ENCODE measurements at regions of chr12 and their contacts with region 1.

Region 1: DNA sequence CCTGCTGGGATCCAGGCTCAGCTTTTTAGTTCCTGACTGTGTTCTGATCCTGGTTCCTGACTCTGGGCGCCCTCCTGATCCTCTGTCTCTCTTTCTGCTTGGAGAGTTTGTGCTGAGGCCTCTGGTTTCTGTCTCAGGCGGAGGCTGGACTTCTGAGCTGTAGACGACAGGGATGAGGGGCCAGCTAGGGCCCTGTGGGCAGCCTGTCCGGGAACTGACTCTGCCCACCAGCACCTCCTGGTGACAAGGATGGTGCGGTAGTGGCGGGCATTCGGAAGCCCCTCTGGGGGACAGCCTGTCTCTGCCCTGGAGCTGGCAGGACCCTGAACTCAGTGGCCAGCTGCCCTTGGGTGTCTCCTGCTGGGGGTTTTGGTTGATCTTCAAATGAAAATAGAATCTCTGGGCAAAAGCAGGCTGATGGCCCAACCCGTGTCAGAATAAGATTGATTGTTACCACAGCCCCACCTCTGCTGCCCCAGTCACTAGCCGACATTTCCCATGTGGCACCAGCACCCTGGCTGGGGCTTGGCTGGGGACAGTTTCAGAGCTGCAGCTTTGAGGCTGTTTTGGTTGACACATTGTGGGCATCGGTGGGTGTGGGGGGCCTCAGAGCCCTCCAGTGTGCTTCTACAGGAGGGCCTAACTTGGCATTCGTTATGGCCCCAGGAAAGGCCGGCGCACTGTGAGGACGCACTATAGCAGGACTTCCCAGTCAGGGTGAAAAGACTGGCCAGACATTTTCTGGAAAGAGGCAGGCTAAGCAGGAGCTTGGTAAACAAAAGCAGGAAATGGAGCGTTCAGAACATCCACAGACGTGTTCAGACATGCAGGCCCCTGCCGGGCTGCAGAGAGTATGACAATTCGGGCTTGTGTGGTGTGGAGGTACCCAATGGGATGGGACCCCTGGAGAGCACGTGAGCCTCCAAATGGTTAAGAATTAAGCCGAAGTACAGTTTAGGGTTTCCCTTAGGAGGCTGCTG is 16.2 kb downstream of the KRT80 start:
- DNase-seq: no peak
- H3K4me3 ChIP-seq: no peak overlapping the region
- H3K27ac ChIP-seq: no peak overlapping the region
- H3K4me1 ChIP-seq: no peaks in the 10 kb centered on the region
- H3K27me3 ChIP-seq: no peaks in the 10 kb centered on the region
- CTCF ChIP-seq: no peak

Region 2: DNA sequence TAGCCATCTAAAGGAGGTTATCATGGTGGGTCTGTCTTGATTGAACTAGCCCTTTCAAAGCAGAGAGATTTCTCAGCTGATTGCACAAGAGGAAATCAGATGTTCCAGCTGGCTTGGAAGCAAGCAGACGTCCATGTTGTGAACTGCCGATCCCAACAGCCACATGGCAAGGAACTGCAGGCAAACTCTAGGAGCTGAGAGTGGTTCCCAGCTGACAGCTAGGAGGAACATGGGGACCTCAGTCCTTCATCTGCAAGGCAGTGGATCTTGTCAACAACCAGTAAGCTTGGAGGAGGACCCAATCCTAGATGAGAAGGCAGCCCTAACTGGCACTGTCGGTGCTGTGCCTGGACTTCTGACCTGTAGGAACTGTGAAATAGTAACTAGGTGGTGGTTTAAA is 216.4 kb before region 1 on chr12:
- CTCF ChIA-PET with region 1: no interaction called
- POLR2A ChIA-PET with region 1: no interaction called
- intact Hi-C with region 1: no loop called
- DNase-seq: no peak
- H3K4me3 ChIP-seq: no peak overlapping the region
- H3K27ac ChIP-seq: no peak overlapping the region
- H3K4me1 ChIP-seq: peaks cover 15% of the 10 kb centered on the region
- H3K27me3 ChIP-seq: no peaks in the 10 kb centered on the region
- CTCF ChIP-seq: no peak

Region 3: GRCh38 chr12:52032804-52033502 is 142.7 kb before region 1 on chr12:
- CTCF ChIA-PET with region 1: no interaction called
- POLR2A ChIA-PET with region 1: no interaction called
- intact Hi-C with region 1: no loop called
- DNase-seq: peak; percentile 89 to 93
- H3K4me3 ChIP-seq: peak overlapping the region; percentile 53; the same call in 1 of the 2 replicates
- H3K27ac ChIP-seq: no peak overlapping the region
- H3K4me1 ChIP-seq: peaks cover 25% of the 10 kb centered on the region
- H3K27me3 ChIP-seq: no peaks in the 10 kb centered on the region; the same call in 1 of the 2 replicates
- CTCF ChIP-seq: no peak

Region 4: GRCh38 chr12:52186145-52186840 is 10.6 kb after region 1 on chr12:
- CTCF ChIA-PET with region 1: interaction called, 3 read pairs
- POLR2A ChIA-PET with region 1: interaction called, 4 read pairs
- intact Hi-C with region 1: loop called (anchors 1 kb)
- DNase-seq: peak; percentile 79 to 94
- H3K4me3 ChIP-seq: no peak overlapping the region; the same call in 1 of the 2 replicates
- H3K27ac ChIP-seq: peak overlapping the region; percentile 75
- H3K4me1 ChIP-seq: peaks cover 59% of the 10 kb centered on the region
- H3K27me3 ChIP-seq: no peaks in the 10 kb centered on the region
- CTCF ChIP-seq: no peak

Region 5: DNA sequence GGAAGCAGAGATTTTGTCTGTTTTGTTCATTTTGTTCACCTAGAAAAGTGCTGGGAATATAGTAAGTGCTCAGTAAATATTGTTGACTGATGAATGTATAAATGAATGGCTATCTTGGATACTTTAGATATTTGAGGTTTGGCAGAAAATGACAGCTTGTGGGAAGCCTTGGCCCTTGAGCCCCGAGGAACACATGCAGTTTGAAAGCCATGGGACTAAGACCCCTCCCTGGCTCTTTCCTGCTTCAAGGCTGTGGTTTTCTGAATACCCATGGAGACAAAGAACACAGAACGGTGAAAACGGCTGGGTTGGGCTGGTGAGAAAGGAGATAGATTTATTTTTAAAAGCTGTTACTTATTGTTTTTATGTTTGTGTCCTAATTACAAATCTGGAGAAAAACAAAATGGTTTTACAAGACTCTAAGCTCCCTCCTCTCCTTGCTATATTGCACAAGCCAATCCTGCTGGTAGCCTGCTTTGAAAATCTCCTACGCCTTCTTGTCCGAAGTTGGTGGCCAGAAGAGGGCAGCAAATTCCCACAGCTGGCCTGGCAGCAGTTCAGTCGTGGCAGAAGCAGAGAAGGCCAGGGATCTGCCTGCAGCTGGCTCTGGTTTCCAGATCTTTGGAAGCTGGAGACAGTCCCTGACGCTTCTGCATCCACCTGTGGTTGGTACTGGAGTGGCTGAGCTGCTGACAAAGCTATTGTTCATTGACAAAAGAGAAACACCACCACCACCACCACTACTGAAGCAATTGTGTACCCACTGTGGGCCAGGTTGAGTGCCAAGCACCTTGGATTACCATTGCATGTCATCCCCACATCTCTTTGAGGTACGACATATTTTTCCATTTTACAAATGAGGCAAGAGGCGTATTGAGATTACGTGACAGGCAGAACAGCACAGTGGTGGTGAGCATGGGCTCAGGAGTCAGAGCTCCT is 196.8 kb after region 1 on chr12:
- CTCF ChIA-PET with region 1: no interaction called
- POLR2A ChIA-PET with region 1: no interaction called
- intact Hi-C with region 1: no loop called
- DNase-seq: peak; percentile 73 to 84
- H3K4me3 ChIP-seq: no peak overlapping the region
- H3K27ac ChIP-seq: no peak overlapping the region
- H3K4me1 ChIP-seq: peaks cover 9% of the 10 kb centered on the region
- H3K27me3 ChIP-seq: no peaks in the 10 kb centered on the region
- CTCF ChIP-seq: peak; percentile 90